Activated naive CD4-positive, alpha-beta T cell treated with anti-CD3 and anti-CD28 coated beads for 36 hours (primary cell): ENCODE measurements at regions of chr3 and their contacts with region 1.

Region 1: GRCh38 chr3:120348981-120349818 is at the start of gene LRRC58:
- DNase-seq: peak; percentile 85
- H3K4me3 Mint-ChIP-seq: peak within 1 kb of the TSS; percentile 89
- H3K27ac Mint-ChIP-seq: peak within 1 kb of the TSS; percentile 89
- H3K4me1 Mint-ChIP-seq: peaks cover 40% of the 10 kb centered on the region
- H3K27me3 Mint-ChIP-seq: no peaks in the 10 kb centered on the region
- total RNA-seq, gene LRRC58: 17.6 to 18.0 TPM

Region 2: DNA sequence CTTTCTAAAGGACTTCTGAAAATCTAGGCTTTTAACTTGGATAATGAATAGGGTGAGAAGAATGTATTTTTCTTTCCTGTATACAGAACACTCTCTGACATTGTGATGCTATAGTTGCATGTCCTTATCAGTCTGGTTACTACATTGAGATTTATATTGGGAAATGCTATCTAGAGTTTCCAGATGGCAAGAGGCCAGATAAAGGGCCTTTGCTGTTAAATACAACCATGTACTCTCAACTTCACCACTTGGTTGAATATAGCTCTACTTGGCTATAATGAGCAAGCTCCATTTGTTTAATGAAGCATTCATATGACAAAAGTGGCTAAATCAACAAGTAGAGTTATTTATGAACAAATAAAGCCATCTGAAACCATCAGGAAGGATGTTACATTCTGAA is 1405.6 kb before region 1 on chr3:
- CTCF ChIA-PET with region 1: no interaction called
- intact Hi-C with region 1: loop called (anchors 10 kb)
- DNase-seq: no peak
- H3K4me3 Mint-ChIP-seq: no peak overlapping the region
- H3K27ac Mint-ChIP-seq: no peak overlapping the region
- H3K4me1 Mint-ChIP-seq: peaks cover 45% of the 10 kb centered on the region
- H3K27me3 Mint-ChIP-seq: no peaks in the 10 kb centered on the region

Region 3: GRCh38 chr3:119498186-119498987 is 850.8 kb before region 1 on chr3 and contains the start of gene TIMMDC1:
- CTCF ChIA-PET with region 1: no interaction called
- intact Hi-C with region 1: loop called (anchors 5 kb)
- DNase-seq: peak; percentile 98
- H3K4me3 Mint-ChIP-seq: peak within 1 kb of the TSS; percentile 99
- H3K27ac Mint-ChIP-seq: peak within 1 kb of the TSS; percentile 94
- H3K4me1 Mint-ChIP-seq: peaks cover 37% of the 10 kb centered on the region
- H3K27me3 Mint-ChIP-seq: no peaks in the 10 kb centered on the region
- total RNA-seq, gene TIMMDC1: 75.6 to 83.8 TPM

Region 4: GRCh38 chr3:119891944-119892721 is 457.1 kb before region 1 on chr3:
- CTCF ChIA-PET with region 1: no interaction called
- intact Hi-C with region 1: loop called (anchors 5 kb)
- DNase-seq: peak; percentile 59
- H3K4me3 Mint-ChIP-seq: no peak overlapping the region
- H3K27ac Mint-ChIP-seq: no peak overlapping the region
- H3K4me1 Mint-ChIP-seq: peaks cover 17% of the 10 kb centered on the region
- H3K27me3 Mint-ChIP-seq: no peaks in the 10 kb centered on the region

Region 5: GRCh38 chr3:120245386-120245785 is 103.8 kb before region 1 on chr3:
- CTCF ChIA-PET with region 1: no interaction called
- intact Hi-C with region 1: loop called (anchors 2 kb)
- DNase-seq: no peak
- H3K4me3 Mint-ChIP-seq: no peak overlapping the region
- H3K27ac Mint-ChIP-seq: no peak overlapping the region
- H3K4me1 Mint-ChIP-seq: no peaks in the 10 kb centered on the region
- H3K27me3 Mint-ChIP-seq: peaks cover 5% of the 10 kb centered on the region

Region 6: DNA sequence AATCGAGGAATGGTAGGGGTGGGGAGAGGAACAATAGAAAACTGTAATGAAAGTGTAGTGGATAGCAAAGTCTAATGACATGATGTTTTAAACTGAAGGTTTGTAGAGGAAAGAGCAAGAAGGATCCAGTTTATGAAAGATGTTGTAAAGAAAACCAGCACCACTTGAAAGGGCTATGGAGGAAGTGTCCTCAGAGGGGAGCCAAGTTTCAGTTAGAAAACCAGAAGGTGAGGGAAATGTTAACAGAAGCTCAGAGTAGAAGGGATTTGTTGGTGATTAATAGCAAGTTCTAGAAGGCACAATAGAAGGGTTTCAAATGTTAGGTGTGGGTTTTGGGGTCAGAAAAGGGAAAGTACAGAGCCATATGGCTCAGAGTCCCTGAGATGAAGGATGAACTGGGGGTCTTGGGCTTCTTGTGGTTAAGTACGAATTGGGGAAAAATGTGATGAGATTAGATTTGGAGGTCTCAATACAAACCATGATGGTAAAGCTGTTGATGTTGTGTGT is 33.8 kb after region 1 on chr3:
- CTCF ChIA-PET with region 1: no interaction called
- intact Hi-C with region 1: no loop called
- DNase-seq: no peak
- H3K4me3 Mint-ChIP-seq: no peak overlapping the region
- H3K27ac Mint-ChIP-seq: no peak overlapping the region
- H3K4me1 Mint-ChIP-seq: no peaks in the 10 kb centered on the region
- H3K27me3 Mint-ChIP-seq: peaks cover 7% of the 10 kb centered on the region

Region 7: GRCh38 chr3:120567370-120568201 is 218.4 kb after region 1 on chr3:
- CTCF ChIA-PET with region 1: no interaction called
- intact Hi-C with region 1: no loop called
- DNase-seq: peak; percentile 10
- H3K4me3 Mint-ChIP-seq: peak overlapping the region; percentile 8
- H3K27ac Mint-ChIP-seq: no peak overlapping the region
- H3K4me1 Mint-ChIP-seq: peaks cover 3% of the 10 kb centered on the region
- H3K27me3 Mint-ChIP-seq: peaks cover 5% of the 10 kb centered on the region

Region 8: DNA sequence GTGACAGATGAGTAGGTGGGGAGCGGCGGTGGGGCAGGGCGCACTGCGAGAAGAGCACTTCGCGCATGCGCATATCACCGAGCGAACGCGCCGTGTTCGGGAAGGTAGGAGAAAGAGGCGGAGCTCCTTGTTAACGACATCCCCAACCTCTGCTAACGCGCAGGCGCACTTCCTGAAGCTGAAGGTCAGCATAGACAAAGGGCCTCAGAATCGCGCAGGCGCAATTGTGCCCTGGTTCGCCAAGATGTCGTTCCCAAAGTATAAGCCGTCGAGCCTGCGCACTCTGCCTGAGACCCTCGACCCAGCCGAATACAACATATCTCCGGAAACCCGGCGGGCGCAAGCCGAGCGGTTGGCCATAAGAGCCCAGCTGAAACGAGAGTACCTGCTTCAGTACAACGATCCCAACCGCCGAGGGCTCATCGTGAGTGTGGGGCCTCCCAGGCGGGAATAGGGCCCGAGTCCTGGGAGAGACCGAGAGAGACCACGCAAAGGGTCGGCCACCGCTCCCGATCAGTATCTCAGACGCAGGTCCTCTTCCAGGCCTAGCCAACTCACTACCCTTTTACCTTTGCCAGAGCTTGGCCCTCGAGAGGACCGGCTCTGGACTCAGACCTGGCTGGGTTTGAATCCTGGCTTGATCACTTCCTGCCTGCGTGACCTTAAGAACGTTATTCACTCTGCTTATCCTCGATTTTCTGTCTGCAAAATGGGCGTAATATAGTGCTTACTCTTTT is 247.1 kb after region 1 on chr3 and contains the start of gene NDUFB4:
- CTCF ChIA-PET with region 1: no interaction called
- intact Hi-C with region 1: loop called (anchors 1 kb)
- DNase-seq: peak; percentile 97
- H3K4me3 Mint-ChIP-seq: peak within 1 kb of the TSS; percentile 86
- H3K27ac Mint-ChIP-seq: peak within 1 kb of the TSS; percentile 95
- H3K4me1 Mint-ChIP-seq: peaks cover 7% of the 10 kb centered on the region
- H3K27me3 Mint-ChIP-seq: no peaks in the 10 kb centered on the region
- total RNA-seq, gene NDUFB4: 146 to 152 TPM